Breast epithelium (tissue), 4 donors: ENCODE measurements at regions of chr20 and their contacts with region 1.

Region 1: DNA sequence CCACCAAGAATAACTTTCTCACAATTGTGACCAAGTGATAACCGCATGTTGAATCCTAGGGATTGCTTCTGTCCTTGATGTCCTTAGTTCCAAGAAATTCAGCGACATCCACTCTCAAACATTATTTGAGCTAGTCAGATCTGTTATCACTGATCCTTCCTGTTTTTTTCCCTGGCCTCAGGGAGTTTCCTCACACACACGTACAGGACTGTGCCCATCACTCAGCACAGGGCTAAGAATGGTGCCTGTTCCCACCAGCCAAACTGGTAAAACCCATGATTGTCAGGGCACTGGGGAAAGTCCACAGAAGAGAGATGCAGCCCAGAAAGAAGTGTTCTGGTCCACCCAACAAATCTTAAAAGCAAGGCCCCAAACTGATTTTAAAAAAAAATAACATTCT is 9.5 kb downstream of the SIRPB2 start:
- DNase-seq: no peak
- H3K4me3 ChIP-seq: no peak overlapping the region
- H3K27ac ChIP-seq: no peak overlapping the region
- H3K4me1 ChIP-seq: no peaks in the 10 kb centered on the region
- H3K27me3 ChIP-seq: no peaks in the 10 kb centered on the region
- CTCF ChIP-seq: no peak
- POLR2A ChIP-seq: no peak

Region 2: DNA sequence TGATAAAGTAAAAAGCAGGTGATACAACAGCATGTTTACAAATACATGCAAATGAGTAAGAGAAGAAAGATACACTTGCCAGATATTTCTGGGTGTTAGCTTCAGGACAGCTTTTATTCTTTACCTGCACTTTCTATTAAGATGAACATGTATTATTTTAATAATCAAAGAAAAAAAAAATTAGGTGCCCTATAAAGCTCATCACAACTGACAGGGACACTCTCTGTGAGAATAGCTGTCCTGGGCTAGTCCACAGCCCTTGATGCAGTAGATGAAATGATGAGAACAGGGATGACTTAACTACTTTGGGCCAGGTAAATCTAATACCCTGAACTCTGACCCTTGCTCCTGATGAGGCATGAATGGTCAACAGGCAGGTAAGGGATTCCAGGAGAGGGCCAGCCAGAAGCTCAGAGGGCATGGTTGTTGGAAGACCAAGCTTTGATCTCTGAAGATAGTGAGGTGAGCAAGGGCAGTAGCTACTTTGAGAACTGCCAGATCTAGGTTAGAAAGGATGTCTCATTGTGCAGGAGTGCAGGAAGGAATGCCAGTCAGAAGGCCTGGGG is 30.7 kb before region 1 on chr20:
- intact Hi-C with region 1: no loop called
- DNase-seq: no peak
- H3K4me3 ChIP-seq: no peak overlapping the region
- H3K27ac ChIP-seq: no peak overlapping the region
- H3K4me1 ChIP-seq: no peaks in the 10 kb centered on the region
- H3K27me3 ChIP-seq: no peaks in the 10 kb centered on the region
- CTCF ChIP-seq: no peak
- POLR2A ChIP-seq: no peak

Region 3: DNA sequence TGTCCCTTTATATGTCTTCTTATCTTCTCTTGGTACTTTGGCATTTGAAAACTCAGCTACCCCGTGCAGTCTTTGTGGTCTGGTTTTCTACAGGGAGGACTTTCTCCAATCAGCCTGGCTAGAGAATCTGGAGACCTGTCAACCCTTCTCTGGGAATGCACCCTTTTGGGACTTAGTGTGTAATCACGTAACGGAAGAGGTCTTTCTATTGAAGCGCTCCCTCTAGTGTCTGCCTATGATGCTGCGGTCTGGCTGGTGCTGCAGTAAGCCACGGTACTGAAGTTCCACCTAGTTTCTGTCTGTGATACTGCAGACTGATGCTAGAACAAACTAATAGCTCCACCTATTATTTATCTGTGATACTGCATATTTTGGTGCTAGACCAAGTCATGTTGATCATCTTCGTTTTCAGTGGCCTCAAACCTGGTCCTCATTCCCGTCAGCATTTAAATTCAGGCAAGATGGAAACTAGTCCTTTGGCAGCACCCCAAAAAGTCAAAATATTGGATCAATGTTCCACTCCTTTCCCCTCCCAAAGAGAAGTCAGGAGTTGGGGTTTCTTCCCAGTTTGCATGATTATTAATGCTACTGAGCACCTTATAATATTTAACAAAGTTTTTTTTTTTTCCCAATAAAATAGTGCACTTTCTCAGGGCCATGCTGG is 22.0 kb after region 1 on chr20:
- intact Hi-C with region 1: loop called (anchors 1 kb)
- DNase-seq: peak in 1 of 2 donors; percentile 63
- H3K4me3 ChIP-seq: no peak overlapping the region
- H3K27ac ChIP-seq: no peak overlapping the region
- H3K4me1 ChIP-seq: no peaks in the 10 kb centered on the region
- H3K27me3 ChIP-seq: no peaks in the 10 kb centered on the region
- CTCF ChIP-seq: peak; percentile 66 to 89 (median 82)
- POLR2A ChIP-seq: no peak

Region 4: DNA sequence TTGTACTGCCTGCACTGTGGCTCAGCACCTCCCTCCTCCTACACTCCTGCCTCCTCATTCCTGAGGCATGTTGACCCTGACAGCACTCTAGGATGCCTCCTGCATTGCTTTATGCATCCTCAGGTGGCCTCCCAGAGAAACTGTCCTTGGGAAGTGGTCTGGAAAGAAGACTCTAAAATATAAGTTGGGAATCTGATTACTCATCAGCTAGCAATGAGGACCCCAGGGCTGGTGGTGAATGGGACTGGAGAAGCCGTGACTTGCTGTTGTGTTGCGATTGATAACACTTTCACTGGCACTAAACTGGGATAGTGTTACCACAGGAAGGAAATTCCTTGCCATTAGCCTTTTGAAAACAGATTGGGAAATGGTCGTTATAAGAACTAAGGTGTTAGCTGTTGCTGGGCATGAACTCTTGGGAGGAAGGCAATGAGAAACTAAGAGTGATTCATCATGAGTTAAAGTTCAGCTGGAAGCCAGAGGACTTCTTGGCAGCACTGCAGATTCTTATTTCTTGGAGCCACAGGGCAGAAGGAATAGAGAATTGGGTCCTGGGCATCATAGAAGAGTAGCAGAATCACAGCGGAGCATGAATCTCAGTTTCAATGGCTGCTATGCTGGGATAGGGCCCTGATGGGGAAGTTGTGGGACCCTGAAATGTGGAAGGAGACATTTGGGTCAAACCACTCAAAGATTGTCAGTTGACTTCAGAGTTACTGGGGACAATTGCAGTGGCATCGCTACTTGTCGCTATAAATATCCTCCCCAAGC is 85.9 kb after region 1 on chr20:
- intact Hi-C with region 1: no loop called
- DNase-seq: no peak
- H3K4me3 ChIP-seq: no peak overlapping the region
- H3K27ac ChIP-seq: no peak overlapping the region
- H3K4me1 ChIP-seq: no peaks in the 10 kb centered on the region
- H3K27me3 ChIP-seq: no peaks in the 10 kb centered on the region
- CTCF ChIP-seq: no peak
- POLR2A ChIP-seq: no peak